Activated CD4-positive, alpha-beta memory T cell treated with anti-CD3 and anti-CD28 coated beads for 36 hours (primary cell): ENCODE measurements at regions of chr6 and their contacts with region 1.

Region 1: DNA sequence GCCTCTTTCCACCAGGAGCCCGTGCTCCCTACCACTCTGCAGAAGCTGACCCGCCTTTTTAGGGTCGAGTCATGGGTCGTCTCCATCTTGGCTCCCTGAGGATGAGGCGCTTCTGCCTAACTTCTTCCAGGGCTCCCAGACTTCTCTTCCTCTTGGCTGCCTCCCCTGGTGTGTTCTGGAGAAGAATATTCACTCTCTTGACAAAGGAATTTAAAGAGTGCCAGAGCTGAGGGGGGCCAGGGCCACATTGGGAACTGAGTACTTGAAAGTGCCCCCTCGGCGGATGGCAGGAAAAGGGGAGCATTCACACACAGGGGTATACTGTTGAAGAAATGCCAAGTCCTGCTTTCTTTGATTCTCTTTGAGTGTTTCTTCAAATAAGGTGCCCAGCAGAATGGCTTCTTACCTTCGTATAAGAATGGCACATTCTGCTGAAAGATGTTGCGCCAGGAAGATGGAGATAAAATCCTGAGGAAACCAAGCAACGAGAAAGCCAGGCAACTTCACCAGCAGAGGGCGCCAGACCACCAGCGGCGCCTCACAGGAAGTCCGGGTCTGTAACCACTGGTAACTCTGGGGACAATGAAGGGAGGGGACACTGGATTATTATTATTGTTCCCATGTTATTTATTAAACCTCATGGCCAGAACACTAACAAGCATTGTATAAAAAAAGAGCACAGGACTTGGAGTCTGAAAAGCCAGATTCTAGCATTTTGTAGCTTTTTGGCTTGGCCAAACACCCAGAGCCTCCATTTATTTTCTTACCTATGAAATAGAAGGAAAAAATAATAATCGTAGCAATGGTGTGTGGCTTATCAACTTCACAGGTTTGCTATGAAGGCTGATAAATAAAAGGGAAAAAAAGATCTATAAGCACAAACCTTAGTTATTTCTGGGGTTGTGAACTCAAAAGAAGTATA is 176.7 kb downstream of the HACE1 start:
- DNase-seq: peak; percentile 81
- H3K4me3 Mint-ChIP-seq: no peak overlapping the region
- H3K27ac Mint-ChIP-seq: no peak overlapping the region
- H3K4me1 Mint-ChIP-seq: peaks cover 13% of the 10 kb centered on the region
- H3K27me3 Mint-ChIP-seq: no peaks in the 10 kb centered on the region

Region 2: DNA sequence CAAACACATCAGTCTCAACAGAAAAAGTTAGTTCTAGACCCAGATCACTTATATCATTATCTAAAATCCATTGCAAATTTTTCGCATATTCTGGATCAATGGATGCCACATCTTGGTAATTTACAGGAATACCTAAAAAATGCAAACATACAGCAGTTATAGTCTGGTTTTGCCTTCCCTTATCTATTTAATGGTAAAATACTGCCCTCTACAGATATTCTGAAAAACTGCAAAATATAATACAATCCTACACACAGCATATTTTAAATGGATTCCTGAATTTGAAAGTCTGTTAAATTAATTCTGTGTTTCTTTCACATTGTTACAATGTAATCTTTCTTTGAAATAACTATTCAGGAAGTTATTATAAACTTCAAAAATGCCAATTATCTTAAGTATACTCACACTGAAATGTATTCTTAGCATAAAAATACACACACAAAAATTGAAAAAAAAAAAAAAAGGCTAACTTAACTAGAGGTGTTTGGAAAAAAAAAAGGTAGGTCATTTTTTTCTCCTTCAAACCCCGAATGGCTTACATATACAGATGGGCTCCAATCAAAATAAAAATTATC is 88.4 kb after region 1 on chr6:
- CTCF ChIA-PET with region 1: interaction called, 54 read pairs
- POLR2A ChIA-PET with region 1: no interaction called
- intact Hi-C with region 1: loop called (anchors 1 kb)
- DNase-seq: no peak
- H3K4me3 Mint-ChIP-seq: no peak overlapping the region
- H3K27ac Mint-ChIP-seq: no peak overlapping the region
- H3K4me1 Mint-ChIP-seq: peaks cover 6% of the 10 kb centered on the region
- H3K27me3 Mint-ChIP-seq: no peaks in the 10 kb centered on the region

Region 3: DNA sequence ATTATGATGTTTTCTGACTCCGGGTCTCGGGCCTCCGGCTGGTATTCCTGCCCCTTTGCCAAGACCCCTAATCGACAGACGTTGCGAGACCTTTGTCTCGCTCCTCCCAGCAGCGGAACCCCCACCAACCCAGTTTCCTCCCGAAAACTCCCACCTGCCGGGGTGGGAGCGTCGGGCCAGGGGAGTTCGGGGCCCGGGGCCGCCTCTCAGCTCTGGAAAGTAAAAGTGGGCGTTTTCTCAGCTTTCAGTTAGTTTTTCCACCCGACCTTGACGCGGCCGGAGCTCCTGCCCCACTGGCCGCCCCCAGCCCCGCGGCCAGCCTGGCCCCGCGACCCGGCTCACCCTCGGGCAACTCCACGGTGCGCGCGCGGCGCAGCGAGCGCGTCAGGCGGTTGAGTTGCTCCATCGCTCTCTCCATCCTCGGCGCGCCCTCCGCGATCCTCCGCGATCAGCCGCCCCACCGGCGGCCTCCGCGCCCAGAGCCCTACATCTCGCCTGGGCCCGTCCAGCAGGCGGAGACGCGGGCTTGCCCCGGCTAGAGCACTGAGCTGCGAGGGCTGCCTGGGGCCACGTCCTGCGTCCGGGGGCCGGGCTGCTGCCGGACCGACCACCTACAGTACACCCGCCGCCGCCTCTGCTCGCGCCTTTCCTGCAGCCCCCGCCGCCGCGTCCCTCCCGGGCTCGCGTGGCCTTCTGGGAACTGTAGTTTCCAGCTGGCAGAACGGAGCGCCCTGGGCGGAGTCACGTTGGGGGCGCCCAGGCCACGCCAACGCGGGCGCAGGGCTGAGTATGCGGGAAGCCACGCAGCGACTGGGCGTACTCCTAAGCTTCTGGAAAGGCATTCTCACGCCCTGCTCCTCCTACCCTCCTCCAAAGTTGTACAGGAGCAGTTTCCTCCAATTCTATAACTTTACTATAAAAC is 176.5 kb after region 1 on chr6 and contains the start of gene HACE1:
- CTCF ChIA-PET with region 1: no interaction called
- POLR2A ChIA-PET with region 1: no interaction called
- intact Hi-C with region 1: loop called (anchors 10 kb)
- DNase-seq: peak; percentile 92
- H3K4me3 Mint-ChIP-seq: peak within 1 kb of the TSS; percentile 93
- H3K27ac Mint-ChIP-seq: peak within 1 kb of the TSS; percentile 79
- H3K4me1 Mint-ChIP-seq: peaks cover 18% of the 10 kb centered on the region
- H3K27me3 Mint-ChIP-seq: peaks cover 2% of the 10 kb centered on the region
- total RNA-seq, gene HACE1: 15.0 to 17.6 TPM

Region 4: GRCh38 chr6:105077596-105078385 is 394.8 kb after region 1 on chr6:
- CTCF ChIA-PET with region 1: interaction called, 11 read pairs
- POLR2A ChIA-PET with region 1: no interaction called
- intact Hi-C with region 1: loop called (anchors 1 kb)
- DNase-seq: no peak
- H3K4me3 Mint-ChIP-seq: no peak overlapping the region
- H3K27ac Mint-ChIP-seq: no peak overlapping the region
- H3K4me1 Mint-ChIP-seq: no peaks in the 10 kb centered on the region
- H3K27me3 Mint-ChIP-seq: no peaks in the 10 kb centered on the region